Naive thymus-derived CD4-positive, alpha-beta T cell (primary cell): ENCODE measurements at regions of chr10 and their contacts with region 1.

Region 1: DNA sequence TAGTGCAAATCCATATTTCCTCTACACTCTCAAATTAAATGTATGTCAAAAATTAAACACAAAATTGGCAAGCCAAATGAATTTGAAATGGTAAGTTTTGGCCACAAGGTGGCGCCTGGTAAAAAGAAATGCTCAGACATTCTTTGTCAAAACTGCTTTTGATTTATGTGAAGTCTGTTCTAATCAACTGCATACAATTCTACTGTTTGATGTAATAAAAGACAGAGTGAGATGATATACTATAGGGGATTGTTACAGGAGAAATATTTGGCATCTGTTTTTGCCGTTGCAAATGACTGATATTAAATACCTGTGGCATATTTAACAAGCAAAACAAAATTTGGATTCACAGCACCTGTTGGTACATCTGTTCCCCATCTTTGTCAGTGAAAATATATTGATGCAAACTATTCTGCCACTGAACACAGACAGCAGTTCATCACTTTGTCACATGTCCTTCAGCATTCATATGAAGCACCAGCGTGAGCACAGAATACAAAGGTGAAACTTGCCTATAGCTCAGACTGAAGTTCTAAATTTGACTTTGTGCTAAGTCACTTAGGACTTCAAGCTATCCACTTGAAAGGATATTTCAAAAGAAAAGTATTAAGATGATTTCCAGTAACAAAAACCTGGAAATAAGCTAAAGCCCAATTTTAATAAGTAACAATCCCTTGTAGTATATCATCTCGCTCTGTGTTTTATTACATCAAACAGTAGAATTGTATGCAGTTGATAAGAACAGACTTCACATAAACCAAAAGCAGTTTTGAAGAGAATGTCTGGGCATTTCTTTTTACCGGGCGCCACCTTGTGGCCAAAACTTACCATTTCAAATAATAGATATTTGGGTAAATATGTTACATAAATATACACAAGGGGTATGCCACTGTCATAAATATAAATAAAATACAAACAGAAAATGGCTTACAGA is 10.2 kb upstream of the CH25H start:
- DNase-seq: peak; percentile 17 to 66 (median 56)
- ATAC-seq: peak; percentile 75
- H3K4me3 ChIP-seq: no peak overlapping the region
- H3K4me3 Mint-ChIP-seq: peak overlapping the region in 5 of 10 donors; percentile 0 to 69 (median 3)
- H3K27ac ChIP-seq: no peak overlapping the region
- H3K27ac Mint-ChIP-seq: peak overlapping the region in 7 of 9 donors; percentile 2 to 79 (median 25)
- H3K4me1 ChIP-seq: peaks cover 0 to 6% of the 10 kb centered on the region in 2 donors
- H3K4me1 Mint-ChIP-seq: peaks cover 8 to 15% (median 10%) of the 10 kb centered on the region in 7 donors
- H3K27me3 ChIP-seq: no peaks in the 10 kb centered on the region
- H3K27me3 Mint-ChIP-seq: peaks cover 0 to 3% (median 0%) of the 10 kb centered on the region in 5 donors

Region 2: GRCh38 chr10:88687853-88688467 is 529.4 kb before region 1 on chr10:
- CTCF ChIA-PET with region 1: no interaction called
- POLR2A ChIA-PET with region 1: no interaction called
- intact Hi-C with region 1: loop called (anchors 1 to 5 kb)
- DNase-seq: peak in 5 of 9 donors; percentile 7 to 38 (median 18)
- ATAC-seq: peak; percentile 70
- H3K4me3 ChIP-seq: no peak overlapping the region
- H3K4me3 Mint-ChIP-seq: no peak overlapping the region
- H3K27ac ChIP-seq: no peak overlapping the region
- H3K27ac Mint-ChIP-seq: no peak overlapping the region
- H3K4me1 ChIP-seq: no peaks in the 10 kb centered on the region
- H3K4me1 Mint-ChIP-seq: no peaks in the 10 kb centered on the region
- H3K27me3 ChIP-seq: no peaks in the 10 kb centered on the region
- H3K27me3 Mint-ChIP-seq: peaks cover 7 to 30% (median 7%) of the 10 kb centered on the region in 5 donors

Region 3: GRCh38 chr10:89029785-89030437 is 187.4 kb before region 1 on chr10:
- CTCF ChIA-PET with region 1: interaction called, 60 read pairs
- POLR2A ChIA-PET with region 1: no interaction called
- intact Hi-C with region 1: loop called (anchors 1 kb)
- DNase-seq: peak; percentile 37 to 68 (median 53)
- ATAC-seq: peak; percentile 85
- H3K4me3 ChIP-seq: no peak overlapping the region
- H3K4me3 Mint-ChIP-seq: peak overlapping the region in 1 of 10 donors; percentile 30
- H3K27ac ChIP-seq: no peak overlapping the region
- H3K27ac Mint-ChIP-seq: no peak overlapping the region
- H3K4me1 ChIP-seq: no peaks in the 10 kb centered on the region
- H3K4me1 Mint-ChIP-seq: peaks cover 0 to 31% (median 0%) of the 10 kb centered on the region in 7 donors
- H3K27me3 ChIP-seq: no peaks in the 10 kb centered on the region
- H3K27me3 Mint-ChIP-seq: no peaks in the 10 kb centered on the region

Region 4: GRCh38 chr10:89242840-89243568 is 25.7 kb after region 1 on chr10:
- CTCF ChIA-PET with region 1: interaction called, 10 read pairs
- POLR2A ChIA-PET with region 1: no interaction called
- intact Hi-C with region 1: no loop called
- DNase-seq: no peak
- ATAC-seq: peak; percentile 87
- H3K4me3 ChIP-seq: no peak overlapping the region
- H3K4me3 Mint-ChIP-seq: no peak overlapping the region
- H3K27ac ChIP-seq: no peak overlapping the region
- H3K27ac Mint-ChIP-seq: no peak overlapping the region
- H3K4me1 ChIP-seq: no peaks in the 10 kb centered on the region
- H3K4me1 Mint-ChIP-seq: peaks cover 0 to 21% (median 10%) of the 10 kb centered on the region in 7 donors
- H3K27me3 ChIP-seq: no peaks in the 10 kb centered on the region
- H3K27me3 Mint-ChIP-seq: no peaks in the 10 kb centered on the region

Region 5: GRCh38 chr10:89391917-89392756 is 174.8 kb after region 1 on chr10 and contains the start of gene IFIT1:
- CTCF ChIA-PET with region 1: no interaction called
- POLR2A ChIA-PET with region 1: interaction called, 6 read pairs
- intact Hi-C with region 1: loop called (anchors 1 to 2 kb)
- DNase-seq: peak in 8 of 9 donors; percentile 36 to 84 (median 72)
- ATAC-seq: peak; percentile 96
- H3K4me3 ChIP-seq: peak within 1 kb of the TSS; percentile 82
- H3K4me3 Mint-ChIP-seq: peak within 1 kb of the TSS; percentile 85 to 96 (median 90)
- H3K27ac ChIP-seq: peak within 1 kb of the TSS; percentile 72
- H3K27ac Mint-ChIP-seq: peak within 1 kb of the TSS; percentile 87 to 97 (median 93)
- H3K4me1 ChIP-seq: peaks cover 14 to 19% of the 10 kb centered on the region in 2 donors
- H3K4me1 Mint-ChIP-seq: peaks cover 14 to 53% (median 45%) of the 10 kb centered on the region in 7 donors
- H3K27me3 ChIP-seq: no peaks in the 10 kb centered on the region
- H3K27me3 Mint-ChIP-seq: peaks cover 0 to 6% (median 0%) of the 10 kb centered on the region in 5 donors
- total RNA-seq, gene IFIT1: 1.7 to 15.7 (median 6.5) TPM